Activated CD4-positive, alpha-beta memory T cell treated with anti-CD3 and anti-CD28 coated beads for 36 hours (primary cell): ENCODE measurements at regions of chr13 and their contacts with region 1.

Region 1: GRCh38 chr13:48233046-48233907 is at the start of gene ITM2B:
- DNase-seq: peak; percentile 74
- H3K4me3 Mint-ChIP-seq: peak within 1 kb of the TSS; percentile 93
- H3K27ac Mint-ChIP-seq: peak within 1 kb of the TSS; percentile 95
- H3K4me1 Mint-ChIP-seq: peaks cover 57% of the 10 kb centered on the region
- H3K27me3 Mint-ChIP-seq: no peaks in the 10 kb centered on the region
- total RNA-seq, gene ITM2B: 87.6 to 92.6 TPM

Region 2: DNA sequence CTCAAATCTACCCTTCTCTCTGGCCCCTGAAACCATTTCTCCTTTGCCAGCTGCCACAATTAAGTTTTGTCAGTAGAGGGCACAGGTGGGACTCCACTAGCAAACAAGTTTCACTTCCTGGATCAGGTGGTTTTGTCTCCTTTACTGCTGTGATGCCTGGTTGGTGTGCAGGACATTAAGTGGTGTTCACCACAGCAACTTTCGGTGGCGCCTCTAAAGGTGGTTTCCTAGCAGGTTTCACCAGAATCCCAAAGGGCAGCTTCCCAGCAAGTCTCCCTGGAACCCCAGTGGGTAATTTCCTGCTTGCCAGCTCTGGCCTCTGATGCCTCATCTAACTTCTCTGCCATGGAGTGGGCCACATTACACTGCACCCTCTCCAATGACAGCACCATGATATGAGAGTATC is 155.0 kb before region 1 on chr13:
- CTCF ChIA-PET with region 1: no interaction called
- POLR2A ChIA-PET with region 1: no interaction called
- intact Hi-C with region 1: no loop called
- DNase-seq: peak; percentile 33
- H3K4me3 Mint-ChIP-seq: no peak overlapping the region
- H3K27ac Mint-ChIP-seq: no peak overlapping the region
- H3K4me1 Mint-ChIP-seq: peaks cover 3% of the 10 kb centered on the region
- H3K27me3 Mint-ChIP-seq: no peaks in the 10 kb centered on the region

Region 3: GRCh38 chr13:48094781-48095502 is 138.3 kb before region 1 on chr13 and contains the start of gene MED4:
- CTCF ChIA-PET with region 1: interaction called, 13 read pairs
- POLR2A ChIA-PET with region 1: interaction called, 9 read pairs
- intact Hi-C with region 1: no loop called
- DNase-seq: peak; percentile 98
- H3K4me3 Mint-ChIP-seq: peak within 1 kb of the TSS; percentile 97
- H3K27ac Mint-ChIP-seq: peak within 1 kb of the TSS; percentile 86
- H3K4me1 Mint-ChIP-seq: peaks cover 38% of the 10 kb centered on the region
- H3K27me3 Mint-ChIP-seq: peaks cover 1% of the 10 kb centered on the region
- total RNA-seq, gene MED4: 49.3 to 53.0 TPM

Region 4: GRCh38 chr13:48185018-48185417 is 48.3 kb before region 1 on chr13:
- CTCF ChIA-PET with region 1: no interaction called
- POLR2A ChIA-PET with region 1: no interaction called
- intact Hi-C with region 1: loop called (anchors 1 kb)
- DNase-seq: no peak
- H3K4me3 Mint-ChIP-seq: no peak overlapping the region
- H3K27ac Mint-ChIP-seq: no peak overlapping the region
- H3K4me1 Mint-ChIP-seq: peaks cover 51% of the 10 kb centered on the region
- H3K27me3 Mint-ChIP-seq: no peaks in the 10 kb centered on the region

Region 5: DNA sequence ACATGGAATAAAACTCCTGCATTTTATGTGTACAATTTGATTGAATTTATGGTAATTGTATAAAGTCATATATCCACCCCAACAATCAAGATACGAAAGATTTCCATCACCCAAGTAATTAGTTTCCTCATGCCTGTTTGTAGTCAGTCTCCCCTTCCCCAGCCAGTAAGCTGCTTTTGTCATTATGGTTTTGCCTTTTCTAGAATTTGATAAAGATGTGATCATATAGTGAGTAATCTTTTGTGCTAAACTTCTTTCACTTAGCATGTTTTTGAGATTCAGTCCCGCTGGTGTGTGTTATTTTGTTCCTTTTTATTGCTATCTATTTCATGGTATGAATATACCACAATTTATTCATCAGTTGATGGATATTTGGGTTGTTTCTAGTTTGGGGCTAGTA is 15.7 kb after region 1 on chr13:
- CTCF ChIA-PET with region 1: interaction called, 5 read pairs
- POLR2A ChIA-PET with region 1: interaction called, 4 read pairs
- intact Hi-C with region 1: loop called (anchors 1 kb)
- DNase-seq: no peak
- H3K4me3 Mint-ChIP-seq: no peak overlapping the region
- H3K27ac Mint-ChIP-seq: peak overlapping the region; percentile 43
- H3K4me1 Mint-ChIP-seq: peaks cover 65% of the 10 kb centered on the region
- H3K27me3 Mint-ChIP-seq: no peaks in the 10 kb centered on the region

Region 6: GRCh38 chr13:48265217-48265815 is 32.0 kb after region 1 on chr13:
- CTCF ChIA-PET with region 1: no interaction called
- POLR2A ChIA-PET with region 1: no interaction called
- intact Hi-C with region 1: no loop called
- DNase-seq: peak; percentile 40
- H3K4me3 Mint-ChIP-seq: no peak overlapping the region
- H3K27ac Mint-ChIP-seq: peak overlapping the region; percentile 4
- H3K4me1 Mint-ChIP-seq: peaks cover 43% of the 10 kb centered on the region
- H3K27me3 Mint-ChIP-seq: no peaks in the 10 kb centered on the region

Region 7: DNA sequence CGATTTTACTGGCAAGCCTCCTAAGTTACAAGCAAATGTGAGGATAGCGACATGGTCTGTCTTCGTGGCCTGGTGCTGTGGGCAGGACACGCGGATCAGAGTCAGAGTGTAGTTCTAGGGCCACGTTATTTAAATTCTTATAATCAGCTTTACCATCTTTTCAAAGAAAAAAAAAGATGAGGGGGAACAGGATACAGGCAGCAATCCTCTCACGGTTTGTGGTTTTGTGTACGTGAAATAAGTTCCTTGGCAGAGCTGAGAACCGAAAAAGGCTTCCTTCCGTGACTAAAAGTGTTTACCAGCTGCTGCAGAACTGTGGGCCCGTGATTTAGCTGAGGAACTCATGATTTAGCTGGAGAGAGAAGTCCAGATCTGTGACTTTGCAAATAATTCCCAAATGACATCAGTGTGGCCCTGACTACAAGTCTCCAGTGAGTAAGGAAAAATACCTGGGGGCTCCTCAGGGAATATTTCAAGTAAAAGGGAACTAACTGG is 272.4 kb after region 1 on chr13:
- CTCF ChIA-PET with region 1: no interaction called
- POLR2A ChIA-PET with region 1: no interaction called
- intact Hi-C with region 1: loop called (anchors 5 kb)
- DNase-seq: peak; percentile 61
- H3K4me3 Mint-ChIP-seq: peak overlapping the region; percentile 39
- H3K27ac Mint-ChIP-seq: peak overlapping the region; percentile 68
- H3K4me1 Mint-ChIP-seq: peaks cover 55% of the 10 kb centered on the region
- H3K27me3 Mint-ChIP-seq: no peaks in the 10 kb centered on the region

Region 8: DNA sequence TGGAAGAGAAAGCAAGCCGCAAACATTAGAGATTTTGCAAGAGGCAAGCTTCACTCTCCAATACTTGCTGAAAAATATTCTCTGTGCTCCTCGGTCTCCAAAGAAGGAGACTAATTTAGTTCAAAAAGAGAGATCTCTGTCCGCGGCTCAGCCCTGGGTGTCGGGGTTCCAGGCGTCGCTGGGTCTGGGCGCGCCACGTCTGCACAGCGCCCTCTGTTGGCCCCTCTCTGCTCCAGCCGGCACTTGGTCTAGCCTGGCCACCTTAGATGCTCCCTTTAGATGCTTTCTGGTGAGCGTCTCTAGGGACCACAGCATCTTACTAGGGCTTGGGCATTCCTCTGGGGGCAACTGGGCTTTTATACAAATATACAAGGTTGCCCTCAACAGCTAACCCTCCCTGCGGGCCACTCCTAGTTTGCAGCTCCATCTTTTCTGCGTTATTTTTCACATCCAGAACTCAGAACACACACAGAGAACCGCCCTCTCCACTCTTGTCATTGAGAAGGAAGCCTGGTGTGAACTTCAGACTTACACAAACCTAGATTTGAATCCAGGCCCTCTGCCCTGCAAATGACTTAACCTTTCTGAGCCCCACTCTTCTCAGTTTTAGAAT is 498.8 kb after region 1 on chr13:
- CTCF ChIA-PET with region 1: no interaction called
- POLR2A ChIA-PET with region 1: no interaction called
- intact Hi-C with region 1: loop called (anchors 5 kb)
- DNase-seq: peak; percentile 70
- H3K4me3 Mint-ChIP-seq: peak overlapping the region; percentile 50
- H3K27ac Mint-ChIP-seq: no peak overlapping the region
- H3K4me1 Mint-ChIP-seq: peaks cover 18% of the 10 kb centered on the region
- H3K27me3 Mint-ChIP-seq: no peaks in the 10 kb centered on the region

Region 9: DNA sequence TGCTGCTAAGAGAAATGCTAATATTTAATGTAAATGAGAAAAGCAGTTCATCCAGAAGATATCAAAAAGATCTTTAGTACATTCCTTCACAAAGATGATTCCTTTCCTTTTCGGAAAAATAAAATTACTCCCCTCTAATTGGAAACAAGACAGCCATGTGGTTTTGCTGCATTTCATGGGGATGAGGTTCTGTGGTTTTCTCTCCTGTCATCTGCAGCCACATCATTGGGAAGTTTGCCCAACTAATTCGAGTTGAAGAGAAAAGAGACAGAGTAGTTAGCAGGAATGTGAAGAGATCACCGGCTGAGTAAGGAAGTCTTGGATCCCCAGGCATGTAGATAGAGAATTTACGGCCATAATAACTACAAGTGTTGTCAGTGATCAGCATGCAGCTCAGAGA is 542.5 kb after region 1 on chr13:
- CTCF ChIA-PET with region 1: no interaction called
- POLR2A ChIA-PET with region 1: no interaction called
- intact Hi-C with region 1: no loop called
- DNase-seq: no peak
- H3K4me3 Mint-ChIP-seq: no peak overlapping the region
- H3K27ac Mint-ChIP-seq: no peak overlapping the region
- H3K4me1 Mint-ChIP-seq: peaks cover 10% of the 10 kb centered on the region
- H3K27me3 Mint-ChIP-seq: peaks cover 8% of the 10 kb centered on the region